Sciatic nerve (tissue), 2 donors: ENCODE measurements at regions of chr3 and their contacts with region 1.

Region 1: DNA sequence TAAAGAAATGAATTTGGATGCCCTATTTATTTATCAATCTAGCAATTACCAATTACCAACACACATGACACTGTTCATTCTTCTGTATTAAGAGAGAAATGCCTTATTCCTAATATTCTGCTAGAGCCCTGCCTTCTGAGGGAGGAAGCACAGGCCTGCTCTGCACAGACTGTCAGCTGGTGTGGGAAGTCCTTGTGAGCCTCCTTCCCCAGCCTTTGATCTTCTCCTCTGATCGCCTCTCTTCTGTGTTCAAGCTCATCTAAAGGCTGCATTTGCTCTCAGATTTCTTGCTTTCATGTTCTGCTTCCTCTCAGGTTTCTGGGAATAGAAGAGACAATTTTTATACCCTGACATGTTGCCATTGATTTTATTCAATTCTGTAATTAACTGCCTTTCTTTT is 290.6 kb upstream of the UMPS start:
- DNase-seq: no peak
- ATAC-seq: no peak

Region 2: GRCh38 chr3:124168262-124168661 is 271.3 kb before region 1 on chr3:
- intact Hi-C with region 1: loop called (anchors 10 kb)
- DNase-seq: no peak
- ATAC-seq: no peak